ENCODE measurements at regions of chr2 and their contacts with region 1.

Region 1: DNA sequence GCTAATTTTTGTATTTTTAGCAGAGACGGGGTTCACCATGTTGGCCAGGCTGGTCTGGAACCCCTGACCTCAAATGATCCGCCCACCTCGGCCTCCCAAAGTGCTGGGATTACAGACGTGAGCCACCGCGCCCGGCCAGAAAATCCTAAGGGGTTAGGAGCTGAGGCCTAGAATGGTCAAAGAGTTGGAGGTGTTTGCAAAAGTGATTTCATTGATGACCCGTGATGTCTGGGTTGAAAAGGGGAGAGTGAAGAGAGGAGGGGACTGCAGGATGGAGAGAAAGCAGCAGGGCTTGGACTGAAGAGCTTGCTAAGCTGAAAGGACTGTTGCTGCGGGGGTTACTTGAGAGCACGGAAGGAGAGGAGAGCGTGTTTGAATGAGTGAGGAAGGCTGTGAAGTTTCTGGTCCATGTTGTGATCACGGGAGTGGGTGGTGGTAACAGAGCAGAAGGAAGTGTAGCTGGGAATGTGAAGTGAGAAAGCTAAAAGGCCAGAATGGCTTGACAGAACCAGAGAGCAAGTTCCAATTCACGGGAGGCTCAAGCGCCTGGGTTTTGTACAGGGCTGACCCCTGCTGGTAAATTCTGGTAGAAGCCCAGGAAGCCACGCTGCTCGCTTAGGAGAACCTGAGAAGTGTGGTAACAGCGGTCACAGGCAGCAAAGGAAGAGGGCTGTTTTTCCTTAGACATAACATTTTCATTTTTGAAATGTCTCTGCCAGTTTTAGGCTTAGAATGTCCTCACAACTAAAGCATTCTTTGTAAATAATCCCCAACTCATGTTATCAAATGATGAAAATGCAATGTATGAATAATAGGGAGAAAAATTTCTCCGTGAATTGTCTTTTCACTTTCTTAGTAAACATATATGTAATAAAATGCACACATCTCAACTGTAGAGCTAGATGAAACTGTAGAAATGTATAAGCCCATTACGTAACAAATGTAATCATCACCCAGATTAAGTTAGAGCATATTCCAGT is 40.5 kb upstream of the ACTR2 start:
- DNase-seq: peak; percentile 83 to 88
- ATAC-seq: peak; percentile 98 to 99
- H3K4me3 ChIP-seq: no peak overlapping the region
- H3K27ac ChIP-seq: no peak overlapping the region
- H3K4me1 ChIP-seq: 0 out of 3 replicates have a peak, but pooled peaks cover 4% of the 10 kb centered on the region
- CTCF ChIP-seq: peak; percentile 90
- EP300 ChIP-seq: no peak
- POLR2A ChIP-seq: no peak
- RAD21 ChIP-seq: peak; percentile 86 to 91

Region 2: GRCh38 chr2:65075605-65076344 is 111.4 kb before region 1 on chr2:
- CTCF ChIA-PET with region 1: interaction called, 69 read pairs
- POLR2A ChIA-PET with region 1: no interaction called
- DNase-seq: no peak
- ATAC-seq: peak; percentile 31 to 49; a peak in 4 of 6 replicates
- H3K4me3 ChIP-seq: no peak overlapping the region
- H3K27ac ChIP-seq: no peak overlapping the region
- H3K4me1 ChIP-seq: peaks cover 19% of the 10 kb centered on the region
- CTCF ChIP-seq: no peak
- EP300 ChIP-seq: no peak
- POLR2A ChIP-seq: no peak; the same call in 1 of the 2 replicates
- RAD21 ChIP-seq: no peak

Region 3: GRCh38 chr2:65169760-65170136 is 17.4 kb before region 1 on chr2:
- CTCF ChIA-PET with region 1: interaction called, 11 read pairs
- POLR2A ChIA-PET with region 1: interaction called, 6 read pairs
- DNase-seq: no peak
- ATAC-seq: no peak
- H3K4me3 ChIP-seq: no peak overlapping the region
- H3K27ac ChIP-seq: no peak overlapping the region; a peak in 2 of 6 replicates
- H3K4me1 ChIP-seq: peaks cover 15% of the 10 kb centered on the region; the same call in 2 of the 3 replicates
- CTCF ChIP-seq: no peak
- EP300 ChIP-seq: no peak
- POLR2A ChIP-seq: no peak
- RAD21 ChIP-seq: no peak

Region 4: DNA sequence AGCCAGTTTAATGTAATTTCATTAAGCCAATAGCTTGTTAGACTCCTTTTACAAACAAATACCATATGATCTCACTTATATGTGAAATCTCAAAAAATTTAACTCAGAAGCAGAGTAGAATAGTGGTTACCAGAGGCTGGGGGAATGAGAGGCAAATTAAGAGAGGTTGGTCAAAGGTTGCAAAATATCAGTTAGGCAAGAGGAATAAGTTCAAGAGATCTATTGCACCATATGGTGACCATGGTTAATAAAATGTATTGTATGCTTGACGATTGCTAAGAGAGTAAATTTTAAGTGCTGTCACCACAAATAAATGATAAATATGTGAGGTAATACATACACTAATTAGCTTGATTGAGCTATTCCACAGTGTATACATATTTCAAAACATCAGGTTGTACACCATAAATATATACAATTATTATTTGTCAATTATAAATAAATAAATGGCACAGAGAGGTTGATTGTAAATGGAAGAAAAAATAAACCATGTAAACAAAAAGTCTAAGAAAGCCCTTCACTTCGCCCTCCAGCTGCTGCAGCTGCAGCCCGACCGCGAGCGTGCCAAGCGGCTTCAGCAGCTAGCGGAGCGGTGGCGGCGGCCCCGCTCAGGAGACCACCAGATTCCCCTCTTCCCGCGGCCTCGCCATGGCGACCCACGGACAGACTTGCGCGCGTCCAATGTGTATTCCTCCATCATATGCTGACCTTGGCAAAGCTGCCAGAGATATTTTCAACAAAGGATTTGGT is 17.5 kb after region 1 on chr2:
- CTCF ChIA-PET with region 1: interaction called, 12 read pairs
- POLR2A ChIA-PET with region 1: no interaction called
- DNase-seq: no peak
- ATAC-seq: no peak
- H3K4me3 ChIP-seq: no peak overlapping the region
- H3K27ac ChIP-seq: no peak overlapping the region
- H3K4me1 ChIP-seq: no peaks in the 10 kb centered on the region
- CTCF ChIP-seq: no peak
- EP300 ChIP-seq: no peak
- POLR2A ChIP-seq: no peak
- RAD21 ChIP-seq: no peak

Region 5: DNA sequence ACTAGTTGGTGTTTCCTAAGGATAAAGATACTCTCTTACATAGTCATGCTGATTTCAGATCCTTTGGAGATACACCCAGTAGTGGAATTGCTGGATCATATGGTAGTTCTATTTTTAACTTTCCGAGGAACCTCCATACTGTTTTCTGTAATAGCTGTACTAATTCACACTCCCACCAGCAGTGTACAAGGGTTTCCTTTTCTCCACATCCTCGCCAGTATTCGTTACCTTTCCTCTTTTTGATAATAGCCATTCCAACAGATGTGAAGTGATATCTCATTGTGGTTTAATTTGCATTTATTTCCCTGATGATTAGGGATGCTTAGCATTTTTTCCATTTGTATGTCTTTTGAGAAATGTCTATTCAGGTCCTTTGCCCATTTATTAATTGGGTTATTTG is 74.5 kb after region 1 on chr2:
- CTCF ChIA-PET with region 1: no interaction called
- POLR2A ChIA-PET with region 1: no interaction called
- DNase-seq: no peak
- ATAC-seq: no peak
- H3K4me3 ChIP-seq: no peak overlapping the region
- H3K27ac ChIP-seq: no peak overlapping the region
- H3K4me1 ChIP-seq: peaks cover 15% of the 10 kb centered on the region; the same call in 2 of the 3 replicates
- CTCF ChIP-seq: no peak
- EP300 ChIP-seq: no peak
- POLR2A ChIP-seq: no peak
- RAD21 ChIP-seq: no peak